ENCODE measurements at regions of chr1 and their contacts with region 1.

Region 1: DNA sequence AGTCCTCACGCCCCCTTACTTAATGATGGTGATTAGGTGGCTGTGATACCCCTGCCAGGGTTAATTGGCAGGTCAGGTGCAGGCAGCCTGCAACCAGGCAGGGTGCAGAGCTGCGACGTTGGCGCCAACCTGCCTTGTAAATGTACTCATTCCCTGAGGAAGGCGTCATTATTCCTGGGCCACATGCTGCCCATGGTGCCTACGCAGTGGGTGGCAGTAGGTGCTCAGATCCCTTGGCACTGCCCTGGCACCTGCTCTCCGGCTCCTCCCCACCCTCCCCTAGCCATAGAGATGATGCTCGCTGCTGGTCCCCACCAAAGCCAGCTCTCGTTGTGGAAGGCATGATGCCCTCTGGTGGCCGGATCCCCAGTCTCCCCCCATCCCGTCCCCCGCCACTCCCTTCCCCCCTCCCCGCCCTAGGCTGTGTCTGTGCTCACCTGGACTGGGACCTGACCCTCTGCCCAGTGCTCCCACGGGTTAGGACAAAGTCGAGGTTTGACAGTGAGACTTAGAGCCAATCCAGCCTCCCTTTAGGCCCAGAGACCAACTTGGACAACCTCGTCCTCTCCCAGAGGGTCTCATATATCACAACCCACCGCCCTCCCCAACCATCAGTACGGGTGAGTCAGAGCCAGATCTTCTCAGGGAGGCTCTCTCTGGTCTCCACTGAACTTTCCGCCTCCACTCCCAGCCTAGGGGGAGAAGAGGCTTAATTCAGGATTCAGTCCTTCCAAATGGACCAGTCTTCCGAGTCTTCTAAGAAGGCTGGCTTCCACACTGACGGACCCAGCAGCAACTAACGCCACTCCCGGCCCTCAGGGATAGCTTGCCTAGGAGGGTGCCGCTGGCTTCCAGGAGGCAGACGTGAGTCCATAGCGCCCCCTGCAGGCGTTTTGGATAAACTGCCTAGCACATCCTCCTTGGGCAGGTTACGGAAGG is 5.7 kb downstream of the KRTCAP2 start:
- DNase-seq: peak; percentile 87 to 91 (median 91)
- H3K4me3 ChIP-seq: peak overlapping the region in 6 of 7 experiments; percentile 29 to 69 (median 43)
- H3K27ac ChIP-seq: peak overlapping the region in 1 of 2 experiments; percentile 22
- H3K4me1 ChIP-seq: peaks cover 0 to 33% (median 28%) of the 10 kb centered on the region in 4 experiments
- H3K27me3 ChIP-seq: no peaks in the 10 kb centered on the region

Region 2: GRCh38 chr1:155105604-155106022 is 61.8 kb before region 1 on chr1:
- CTCF ChIA-PET with region 1: interaction called, 79 read pairs
- POLR2A ChIA-PET with region 1: no interaction called
- DNase-seq: no peak
- H3K4me3 ChIP-seq: no peak overlapping the region
- H3K27ac ChIP-seq: no peak overlapping the region
- H3K4me1 ChIP-seq: peaks cover 0 to 22% (median 16%) of the 10 kb centered on the region in 4 experiments
- H3K27me3 ChIP-seq: no peaks in the 10 kb centered on the region

Region 3: GRCh38 chr1:155117617-155118016 is 49.8 kb before region 1 on chr1:
- CTCF ChIA-PET with region 1: interaction called, 10 read pairs
- POLR2A ChIA-PET with region 1: no interaction called
- DNase-seq: no peak
- H3K4me3 ChIP-seq: no peak overlapping the region
- H3K27ac ChIP-seq: no peak overlapping the region
- H3K4me1 ChIP-seq: no peaks in the 10 kb centered on the region
- H3K27me3 ChIP-seq: no peaks in the 10 kb centered on the region

Region 4: GRCh38 chr1:155127105-155127964 is 40.1 kb before region 1 on chr1 and contains the start of gene EFNA1:
- CTCF ChIA-PET with region 1: interaction called, 52 read pairs
- POLR2A ChIA-PET with region 1: interaction called, 8 read pairs
- DNase-seq: peak in 2 of 3 donors; percentile 42 to 56
- H3K4me3 ChIP-seq: peak within 1 kb of the TSS; percentile 47 to 89 (median 82)
- H3K27ac ChIP-seq: peak within 1 kb of the TSS in 1 of 2 experiments; percentile 78
- H3K4me1 ChIP-seq: peaks cover 9 to 54% (median 49%) of the 10 kb centered on the region in 4 experiments
- H3K27me3 ChIP-seq: peaks cover 0 to 9% (median 3%) of the 10 kb centered on the region in 5 experiments

Region 5: GRCh38 chr1:155135415-155136028 is 31.9 kb before region 1 on chr1 and contains the start of gene SLC50A1:
- CTCF ChIA-PET with region 1: interaction called, 52 read pairs
- POLR2A ChIA-PET with region 1: interaction called, 12 read pairs
- DNase-seq: peak; percentile 95 to 96 (median 96)
- H3K4me3 ChIP-seq: peak within 1 kb of the TSS; percentile 47 to 89 (median 76)
- H3K27ac ChIP-seq: peak within 1 kb of the TSS; percentile 97 to 98
- H3K4me1 ChIP-seq: peaks cover 16 to 51% (median 45%) of the 10 kb centered on the region in 4 experiments
- H3K27me3 ChIP-seq: no peaks in the 10 kb centered on the region

Region 6: DNA sequence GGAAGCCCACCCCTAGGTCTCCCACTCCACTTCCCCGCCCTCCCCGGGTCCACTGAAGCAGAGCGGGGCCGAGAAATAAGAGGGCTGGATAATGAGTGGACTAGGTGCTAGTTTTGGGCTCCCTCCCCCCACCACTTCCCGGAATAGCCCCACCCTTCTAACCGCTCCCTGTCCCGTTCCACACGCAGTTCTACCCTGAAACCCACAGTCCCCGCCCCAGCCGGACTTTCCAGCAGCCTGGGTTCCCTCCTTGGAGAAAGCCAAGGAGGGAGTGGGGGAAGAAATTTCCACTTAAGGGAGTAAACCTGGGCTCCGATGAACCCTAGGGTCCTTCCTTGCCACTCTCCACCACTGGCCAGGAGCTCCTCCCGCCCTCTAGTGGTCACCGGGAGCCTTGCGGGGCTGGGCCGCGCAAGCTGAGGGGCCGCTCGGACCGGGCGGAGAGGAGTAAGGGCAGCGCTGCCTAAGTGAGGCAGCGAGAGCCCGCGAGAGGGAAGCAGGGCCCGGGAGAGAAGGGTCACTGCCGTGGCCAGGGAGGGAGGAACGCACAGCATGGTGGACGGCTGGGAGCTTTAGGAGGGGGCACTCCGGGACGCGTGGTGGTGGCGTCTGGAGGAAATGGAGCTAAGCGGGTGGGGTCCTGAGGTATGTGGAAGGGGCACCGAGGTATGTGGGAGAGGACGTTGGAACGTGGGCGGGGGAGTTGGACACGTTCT is 26.0 kb after region 1 on chr1:
- CTCF ChIA-PET with region 1: interaction called, 130 read pairs
- POLR2A ChIA-PET with region 1: interaction called, 8 read pairs
- DNase-seq: peak; percentile 79 to 84 (median 81)
- H3K4me3 ChIP-seq: peak overlapping the region; percentile 51 to 86 (median 74)
- H3K27ac ChIP-seq: peak overlapping the region; percentile 66 to 84
- H3K4me1 ChIP-seq: peaks cover 0 to 35% (median 32%) of the 10 kb centered on the region in 4 experiments
- H3K27me3 ChIP-seq: no peaks in the 10 kb centered on the region

Region 7: GRCh38 chr1:155273343-155274245 is 106.2 kb after region 1 on chr1 and contains the start of gene CLK2:
- CTCF ChIA-PET with region 1: no interaction called
- POLR2A ChIA-PET with region 1: no interaction called
- DNase-seq: peak; percentile 93 to 95 (median 94)
- H3K4me3 ChIP-seq: peak within 1 kb of the TSS; percentile 79 to 95 (median 83)
- H3K27ac ChIP-seq: peak within 1 kb of the TSS; percentile 46 to 80
- H3K4me1 ChIP-seq: peaks cover 11 to 38% (median 29%) of the 10 kb centered on the region in 4 experiments
- H3K27me3 ChIP-seq: no peaks in the 10 kb centered on the region

Measured in common myeloid progenitor, CD34-positive (primary cell).